Lower leg skin (tissue), 4 donors: ENCODE measurements at regions of chr7 and their contacts with region 1.

Region 1: DNA sequence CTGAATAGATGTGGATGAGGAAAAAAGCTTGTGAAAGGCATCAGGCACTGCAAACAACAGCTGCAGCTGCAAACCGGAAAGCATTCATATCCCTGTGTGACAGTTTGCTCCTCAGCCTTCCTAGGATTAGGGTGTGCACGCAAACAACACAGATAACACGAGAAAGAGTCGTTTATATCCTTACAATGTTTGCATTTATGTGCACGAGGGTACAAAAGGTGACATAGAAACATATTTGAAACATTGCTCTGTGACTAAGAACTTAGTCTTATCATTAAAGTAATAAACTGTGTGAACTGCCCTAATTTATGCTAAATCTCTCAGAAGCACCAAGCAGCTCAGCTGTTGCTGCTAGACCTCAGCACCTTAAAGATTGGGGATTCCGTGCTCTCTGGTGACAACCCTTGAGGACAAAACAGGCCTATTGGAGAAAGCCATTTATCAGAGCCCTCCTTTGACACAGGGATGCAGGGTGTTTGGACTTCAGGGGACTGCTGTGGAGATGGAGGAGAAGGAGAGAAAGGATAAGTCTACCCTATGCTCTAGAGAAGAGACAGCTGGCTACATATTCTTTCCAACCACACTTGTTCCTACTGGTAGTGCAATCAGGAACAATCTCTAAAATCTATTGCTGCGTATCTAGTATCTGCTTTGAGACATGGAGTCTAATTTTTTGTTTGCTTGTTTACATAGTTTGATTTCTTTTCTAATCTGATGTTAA is 176.2 kb downstream of the GNAT3 start:
- DNase-seq: no peak
- H3K4me3 ChIP-seq: no peak overlapping the region
- CTCF ChIP-seq: no peak
- POLR2A ChIP-seq: no peak

Region 2: GRCh38 chr7:80347173-80347572 is 11.5 kb after region 1 on chr7:
- intact Hi-C with region 1: loop called (anchors 2 kb)
- DNase-seq: no peak
- H3K4me3 ChIP-seq: no peak overlapping the region
- CTCF ChIP-seq: no peak
- POLR2A ChIP-seq: no peak

Region 3: DNA sequence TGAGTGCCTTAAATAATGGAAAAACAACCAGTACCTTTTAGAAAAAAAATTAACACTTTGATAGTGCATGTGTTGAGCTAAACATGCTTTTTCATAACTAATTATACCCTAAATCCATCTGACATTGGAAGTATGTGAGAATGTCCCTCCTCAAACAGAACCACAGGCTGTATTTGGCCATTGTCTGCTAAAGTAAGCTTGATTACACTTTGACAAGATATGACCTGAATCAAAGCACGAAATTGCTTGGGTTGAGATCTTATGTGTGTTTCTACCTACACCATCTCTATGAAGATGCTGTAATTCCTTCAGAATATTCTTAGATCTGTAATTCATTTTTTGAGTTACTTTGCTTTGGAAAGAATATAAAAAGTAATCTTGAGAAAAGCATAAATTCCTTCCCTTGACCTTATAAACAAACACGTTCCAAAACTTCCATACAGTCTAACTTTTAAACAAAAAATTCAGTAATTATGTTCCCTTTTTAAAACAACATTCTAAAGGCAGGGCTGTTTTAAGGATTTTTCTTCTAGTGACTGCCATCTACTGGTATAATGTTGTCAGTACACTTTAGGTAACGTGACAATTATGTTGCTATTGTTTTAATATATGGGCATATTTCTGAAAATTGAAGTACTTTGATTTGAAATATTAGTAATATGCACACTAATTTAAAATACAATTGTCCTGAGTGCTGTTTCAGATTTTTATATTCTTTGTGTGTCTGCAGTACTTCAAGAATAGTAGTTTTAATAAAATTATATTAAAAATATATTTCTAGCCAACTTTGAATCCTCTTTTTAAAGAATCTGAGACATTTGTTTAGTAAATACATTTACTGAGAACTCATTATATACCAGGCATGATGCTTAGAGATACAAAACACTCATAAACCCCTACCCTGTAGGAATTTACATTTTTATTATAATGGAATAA is 323.7 kb after region 1 on chr7:
- intact Hi-C with region 1: loop called (anchors 5 kb)
- DNase-seq: no peak
- H3K4me3 ChIP-seq: no peak overlapping the region
- CTCF ChIP-seq: no peak
- POLR2A ChIP-seq: no peak